Activated CD8-positive, alpha-beta memory T cell treated with anti-CD3 and anti-CD28 coated beads, Interleukin-2, amount 10 ng/mL, durations not matched to agents 7 days and 5 days (primary cell): ENCODE measurements at regions of chr1 and their contacts with region 1.

Region 1: DNA sequence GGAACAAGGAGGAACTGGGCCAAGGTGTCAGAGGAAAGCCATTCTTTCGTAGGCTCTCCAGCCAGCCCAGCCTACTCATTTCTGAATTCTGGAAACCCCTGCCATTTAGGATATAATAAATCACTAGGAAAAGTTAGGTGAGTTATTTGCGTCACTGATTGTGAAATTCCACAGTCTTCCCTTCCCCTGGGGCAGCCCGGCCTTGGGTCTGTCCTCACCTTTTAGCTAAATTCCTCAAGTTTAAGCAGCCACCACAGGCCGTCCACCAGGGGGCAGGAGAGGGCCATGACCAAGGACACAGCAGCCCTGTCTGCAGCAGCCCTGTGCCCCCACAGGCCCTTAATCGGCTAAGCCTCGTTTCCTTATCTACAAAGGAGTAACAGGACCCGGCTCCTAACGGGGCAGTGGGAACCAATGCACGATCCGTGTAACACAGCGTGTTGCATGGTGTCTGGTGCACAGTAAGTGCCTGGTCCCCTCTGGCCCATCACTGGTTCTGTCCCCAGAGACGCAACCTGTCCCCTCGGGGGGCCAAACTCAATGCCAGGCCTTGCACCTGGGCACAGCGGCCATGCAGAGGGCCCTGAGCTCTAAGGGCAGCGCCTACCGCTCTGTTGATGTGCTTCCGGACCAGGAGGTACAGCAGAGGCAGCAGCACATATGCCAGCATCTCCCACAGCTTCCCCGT is 18.1 kb downstream of the GPR157 start:
- DNase-seq: peak; percentile 91
- ATAC-seq: peak; percentile 81
- H3K4me3 Mint-ChIP-seq: no peak overlapping the region
- H3K27ac Mint-ChIP-seq: no peak overlapping the region
- H3K4me1 Mint-ChIP-seq: peaks cover 25% of the 10 kb centered on the region
- H3K27me3 Mint-ChIP-seq: no peaks in the 10 kb centered on the region

Region 2: DNA sequence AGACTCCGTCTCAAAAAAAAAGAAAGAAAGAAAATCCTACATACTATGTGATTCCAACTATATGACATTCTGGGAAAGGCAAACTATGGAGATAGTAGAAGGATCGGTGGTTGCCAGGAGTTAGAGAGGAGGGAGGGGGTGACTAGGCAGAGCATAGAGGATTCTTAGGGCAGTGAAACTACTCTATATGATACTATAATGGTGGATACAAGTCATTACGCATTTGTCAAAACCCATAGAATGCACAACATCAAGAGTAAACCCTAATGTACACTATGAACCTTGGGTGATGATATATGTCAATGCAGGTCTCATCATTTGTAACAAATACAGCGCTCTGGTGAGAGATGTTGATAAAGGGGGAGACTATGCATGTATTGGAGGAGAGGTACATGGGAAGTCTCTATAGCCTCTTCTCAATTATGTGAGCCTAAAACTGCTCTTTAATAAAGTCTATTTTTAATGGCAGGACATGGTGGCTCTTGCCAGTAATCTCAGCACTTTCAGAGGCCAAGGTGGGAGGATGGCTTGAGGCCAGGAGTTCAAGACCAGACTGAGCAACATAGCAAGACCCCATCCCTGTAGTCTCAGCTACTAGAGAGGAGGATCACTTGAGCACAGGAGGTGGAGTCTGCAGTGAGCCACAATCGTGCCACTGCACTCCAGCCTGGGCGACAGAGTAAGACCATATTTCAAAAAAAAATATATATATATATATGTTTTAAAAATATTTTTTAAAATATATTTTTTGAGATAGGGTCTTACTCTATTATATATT is 58.4 kb before region 1 on chr1:
- CTCF ChIA-PET with region 1: no interaction called
- DNase-seq: no peak
- ATAC-seq: no peak
- H3K4me3 Mint-ChIP-seq: no peak overlapping the region
- H3K27ac Mint-ChIP-seq: no peak overlapping the region
- H3K4me1 Mint-ChIP-seq: no peaks in the 10 kb centered on the region
- H3K27me3 Mint-ChIP-seq: peaks cover 24% of the 10 kb centered on the region

Region 3: GRCh38 chr1:9196129-9197040 is 85.6 kb after region 1 on chr1:
- CTCF ChIA-PET with region 1: interaction called, 44 read pairs
- DNase-seq: peak; percentile 74
- ATAC-seq: peak; percentile 68
- H3K4me3 Mint-ChIP-seq: no peak overlapping the region
- H3K27ac Mint-ChIP-seq: no peak overlapping the region
- H3K4me1 Mint-ChIP-seq: peaks cover 28% of the 10 kb centered on the region
- H3K27me3 Mint-ChIP-seq: peaks cover 72% of the 10 kb centered on the region